ENCODE measurements at regions of chr11 and their contacts with region 1.

Region 1: DNA sequence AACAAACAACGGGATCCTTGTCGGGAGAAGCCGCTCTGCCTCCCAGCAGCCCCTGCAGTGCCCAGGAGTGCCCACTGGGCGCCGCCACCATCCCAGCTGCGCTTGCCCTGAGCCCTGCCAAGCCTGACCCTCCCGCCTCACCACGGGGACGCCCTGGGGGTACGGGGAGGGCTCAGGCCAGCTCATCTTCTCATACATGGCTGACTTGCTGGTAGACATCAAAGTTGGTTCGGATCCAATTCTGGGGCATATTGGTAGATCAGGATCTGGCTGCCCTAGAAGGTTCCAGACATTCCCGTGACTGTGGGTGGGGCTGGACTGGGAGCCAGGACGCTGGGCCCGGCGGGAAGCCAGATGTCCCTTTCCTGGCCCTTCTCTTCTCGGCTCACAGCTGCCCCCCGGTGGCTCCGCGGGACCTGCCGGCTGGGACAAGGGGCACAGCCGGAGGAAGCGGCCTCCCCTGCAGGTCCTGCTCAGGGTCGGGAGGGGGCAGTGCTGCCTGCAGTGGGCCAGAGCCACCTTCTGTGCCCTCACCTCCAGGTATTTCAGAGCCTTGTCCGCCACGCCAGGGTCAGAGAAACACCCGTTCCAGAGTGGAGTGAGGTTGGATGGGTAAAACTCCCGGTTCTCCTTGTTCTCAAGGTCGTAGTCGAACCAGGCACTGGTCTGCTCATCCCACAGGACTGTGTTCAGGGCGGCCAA is 10.6 kb upstream of the TREH start:
- DNase-seq: peak; percentile 97

Region 2: GRCh38 chr11:118791111-118791965 is 101.3 kb after region 1 on chr11 and contains the start of gene DDX6:
- intact Hi-C with region 1: loop called (anchors 2 kb)
- DNase-seq: peak; percentile 95
- total RNA-seq, gene DDX6: 118 TPM

Region 3: GRCh38 chr11:118956094-118956846 is 266.3 kb after region 1 on chr11 and contains the start of gene UPK2:
- intact Hi-C with region 1: loop called (anchors 2 kb)
- DNase-seq: peak; percentile 94
- total RNA-seq, gene UPK2: not detected

Measured in cardiac septum (tissue), 1 donor.